Head of caudate nucleus (tissue), 42 donors: ENCODE measurements at regions of chr16 and their contacts with region 1.

Region 1: DNA sequence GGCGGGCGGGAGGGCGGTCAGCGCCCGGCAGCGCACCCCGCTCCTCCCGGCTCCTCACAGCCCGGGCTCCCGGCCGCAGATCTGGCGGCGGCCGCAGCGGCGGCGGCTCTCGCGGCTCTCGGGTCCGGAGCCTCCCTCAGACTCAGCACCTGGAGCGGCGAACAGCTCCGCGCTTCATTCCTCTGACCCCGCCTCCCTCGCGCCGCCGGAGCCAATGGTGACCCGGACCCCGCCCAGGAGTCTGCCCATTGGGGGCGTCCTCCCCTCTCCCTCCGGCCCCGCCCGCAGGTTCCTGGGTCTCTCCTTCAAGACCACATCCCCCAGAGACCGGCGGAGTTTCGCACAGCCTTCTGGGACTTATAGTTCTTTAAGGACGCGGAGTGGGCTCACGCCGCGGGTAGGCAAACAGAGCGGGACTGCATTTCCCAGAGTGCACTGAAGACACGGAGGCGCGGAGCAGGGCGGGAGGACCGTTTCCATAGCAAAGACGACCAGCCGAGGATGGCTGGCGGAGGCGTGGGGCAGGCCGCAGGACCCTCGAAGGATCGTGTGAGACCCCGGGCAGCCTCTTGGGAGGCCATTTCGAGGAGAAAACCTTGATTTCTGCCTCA is at the start of gene SMPD3:
- DNase-seq: peak; percentile 98 to 100 (median 100)

Region 2: DNA sequence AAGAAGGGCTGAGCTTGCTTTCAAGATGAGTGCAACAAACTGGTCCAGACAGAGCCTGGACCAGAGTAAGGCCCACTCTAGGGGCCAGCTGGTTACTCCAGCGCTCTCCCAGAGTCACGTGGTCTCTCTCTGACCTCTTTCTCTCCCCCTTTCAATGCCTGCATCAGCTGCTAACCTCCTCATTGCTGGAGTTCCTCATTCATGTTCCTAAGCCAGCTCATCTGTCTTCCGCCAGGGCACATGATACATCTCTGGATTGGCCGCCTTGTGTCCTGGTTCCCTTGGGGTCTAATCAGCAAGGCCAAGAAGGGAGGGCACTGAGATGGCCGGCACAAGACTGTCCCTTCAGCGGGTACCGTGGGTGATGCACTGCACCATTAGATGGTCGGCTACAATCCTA is 63.7 kb after region 1 on chr16:
- intact Hi-C with region 1: loop called (anchors 5 kb)
- DNase-seq: peak in 1 of 42 donors; percentile 48